Spleen (tissue), 13 donors: ENCODE measurements at regions of chr14 and their contacts with region 1.

Region 1: DNA sequence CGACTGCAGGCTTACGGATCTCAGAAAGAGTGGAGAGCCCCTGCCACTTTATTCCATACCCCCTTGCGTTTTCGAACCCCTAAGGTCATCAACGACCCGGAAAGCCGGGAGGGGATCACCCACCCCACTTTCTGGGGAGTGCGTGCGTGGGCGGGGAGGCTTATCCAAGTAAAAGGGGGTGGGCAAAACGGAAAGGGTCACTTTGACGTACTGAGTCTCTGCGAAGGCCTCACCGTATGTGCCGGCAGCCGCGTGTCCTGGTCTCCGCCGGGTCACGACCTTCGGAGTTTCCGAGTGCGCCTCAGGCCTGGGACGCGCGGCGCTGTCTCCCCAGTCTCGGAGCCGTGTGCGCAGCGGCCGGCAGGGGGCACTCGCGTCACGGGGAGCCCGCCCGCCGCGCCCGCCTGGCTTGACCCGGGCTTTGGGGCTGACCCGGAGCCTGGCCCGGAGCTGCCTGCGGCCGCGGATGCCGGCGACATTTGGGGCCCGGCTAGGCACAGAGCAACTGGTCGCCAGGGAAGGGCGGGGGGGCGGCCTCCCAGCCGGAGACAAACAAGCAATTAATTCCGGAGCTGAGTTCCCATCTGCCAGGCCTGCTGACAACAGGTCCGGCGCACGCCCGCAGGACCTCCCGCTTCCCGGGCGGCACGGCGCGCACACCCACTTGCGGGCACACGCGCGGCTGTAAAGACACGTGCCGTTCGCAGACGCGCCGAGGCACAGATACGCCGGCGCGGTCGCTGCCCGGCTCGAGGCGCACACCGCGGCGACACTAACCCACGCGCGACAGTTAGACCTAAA is 890 bp upstream of the KIF26A start:
- DNase-seq: peak; percentile 91
- H3K4me3 ChIP-seq: peak overlapping the region; percentile 41 to 76 (median 54)
- H3K27ac ChIP-seq: peak overlapping the region; percentile 35 to 80 (median 64)
- H3K4me1 ChIP-seq: peaks cover 23 to 65% (median 50%) of the 10 kb centered on the region in 6 donors
- H3K27me3 ChIP-seq: peaks cover 0 to 89% (median 63%) of the 10 kb centered on the region in 7 donors
- CTCF ChIP-seq: peak; percentile 57 to 93 (median 89)
- POLR2A ChIP-seq: no peak

Region 2: DNA sequence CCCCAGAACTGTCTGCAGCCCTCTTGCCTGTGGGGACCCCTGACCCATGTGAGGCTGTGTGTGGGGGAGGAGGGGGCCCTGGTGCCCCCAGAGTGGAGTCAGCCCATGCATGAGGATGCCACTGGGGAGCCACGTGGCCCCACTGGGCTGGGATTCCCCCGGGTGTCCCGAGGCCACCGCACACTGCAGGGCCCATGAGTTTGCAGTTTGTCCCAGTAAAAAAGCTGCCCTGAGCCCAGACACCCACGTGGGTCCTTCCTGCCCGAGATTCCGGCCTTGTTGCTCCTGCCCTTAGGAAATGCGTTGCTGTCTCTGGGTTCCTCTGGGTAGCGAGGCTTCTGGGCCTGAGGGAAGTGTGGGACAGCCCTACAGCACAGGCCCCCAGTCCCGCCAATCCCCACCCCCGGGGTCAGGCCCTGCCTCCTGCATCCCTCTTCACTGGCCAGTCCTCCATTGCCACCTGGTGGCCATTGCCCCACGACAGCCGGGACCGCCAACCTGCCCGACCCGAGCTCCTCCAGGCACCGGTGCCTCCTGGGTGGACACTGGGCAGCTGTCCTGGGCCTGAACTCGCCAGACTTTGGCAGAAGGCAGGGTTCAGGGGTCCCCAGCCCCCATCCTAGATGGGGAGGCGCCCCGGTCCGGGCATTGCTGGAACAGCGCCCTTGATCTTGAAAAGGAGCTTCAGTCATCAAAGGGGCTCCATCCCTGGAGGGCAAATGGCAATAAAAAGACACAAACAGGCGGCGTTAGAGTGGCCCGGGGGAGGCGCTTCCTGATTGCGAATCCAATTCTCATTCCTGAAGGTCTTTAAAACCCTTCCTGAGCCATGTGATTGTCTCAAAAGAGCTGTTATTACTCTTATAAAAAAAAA is 426.5 kb after region 1 on chr14:
- intact Hi-C with region 1: loop called (anchors 5 kb)
- DNase-seq: peak; percentile 93
- H3K4me3 ChIP-seq: peak overlapping the region in 1 of 8 donors; percentile 18
- H3K27ac ChIP-seq: peak overlapping the region in 5 of 8 donors; percentile 38 to 63 (median 44)
- H3K4me1 ChIP-seq: peaks cover 10 to 22% (median 18%) of the 10 kb centered on the region in 6 donors
- H3K27me3 ChIP-seq: peaks cover 0 to 58% (median 23%) of the 10 kb centered on the region in 7 donors
- CTCF ChIP-seq: peak; percentile 65 to 96 (median 83)
- POLR2A ChIP-seq: no peak